ENCODE measurements at regions of chr10 and their contacts with region 1.

Region 1: GRCh38 chr10:111856631-111857030 is 326.9 kb downstream of the GPAM start:
- DNase-seq: no peak
- H3K4me3 ChIP-seq: no peak overlapping the region
- H3K27ac ChIP-seq: no peak overlapping the region
- H3K4me1 ChIP-seq: no peaks in the 10 kb centered on the region
- H3K27me3 ChIP-seq: no peaks in the 10 kb centered on the region
- CTCF ChIP-seq: peak in 1 of 3 donors; percentile 29
- POLR2A ChIP-seq: no peak

Region 2: DNA sequence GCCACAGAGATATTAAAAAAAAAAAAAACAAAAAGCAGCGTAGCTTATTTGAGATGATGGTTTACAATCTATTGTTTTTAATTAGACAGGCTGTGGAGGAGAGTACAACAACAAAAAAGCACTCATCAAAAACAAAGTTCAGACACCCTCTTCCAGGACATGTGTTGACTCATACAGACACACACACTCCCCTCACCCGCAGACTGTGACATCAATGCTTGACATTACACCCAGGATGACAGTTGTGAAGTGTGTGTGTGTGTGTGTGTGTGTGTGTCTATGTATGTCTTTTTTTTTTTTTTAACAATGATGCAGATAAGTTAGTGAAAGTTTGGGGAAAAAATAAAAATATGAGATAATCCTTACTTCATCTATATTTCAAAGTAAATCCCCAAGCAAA is 23.3 kb after region 1 on chr10:
- intact Hi-C with region 1: loop called (anchors 1 kb)
- DNase-seq: no peak
- H3K4me3 ChIP-seq: no peak overlapping the region
- H3K27ac ChIP-seq: no peak overlapping the region
- H3K4me1 ChIP-seq: no peaks in the 10 kb centered on the region
- H3K27me3 ChIP-seq: no peaks in the 10 kb centered on the region
- CTCF ChIP-seq: no peak
- POLR2A ChIP-seq: no peak

Region 3: DNA sequence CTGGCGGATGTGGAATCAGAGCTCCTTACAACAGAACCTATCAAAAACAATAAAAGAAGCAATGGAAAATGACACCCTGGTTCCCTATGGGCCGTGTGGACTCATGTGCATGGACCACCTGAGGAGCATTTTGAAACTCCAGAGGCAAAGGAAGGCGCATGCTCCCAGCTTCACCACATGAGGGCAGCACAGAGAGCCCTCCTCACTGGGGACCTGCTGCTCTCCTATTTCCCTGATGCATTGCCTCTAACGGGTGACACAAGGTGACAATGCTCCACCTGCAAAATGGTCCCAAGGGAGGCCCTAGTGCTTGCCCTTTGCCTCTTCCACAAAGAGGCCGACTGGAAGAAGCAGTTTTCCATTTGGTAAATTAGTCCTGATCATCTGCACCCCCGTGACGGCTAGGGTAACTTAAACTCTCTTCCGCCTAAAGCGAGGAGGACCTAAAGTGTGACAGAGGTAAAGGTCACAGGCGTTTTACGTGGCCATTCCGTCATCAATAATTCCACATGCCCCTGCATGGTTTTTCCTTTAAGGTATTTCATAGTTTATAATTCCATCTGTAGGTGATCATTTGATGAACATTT is 259.3 kb after region 1 on chr10:
- intact Hi-C with region 1: no loop called
- DNase-seq: no peak
- H3K4me3 ChIP-seq: no peak overlapping the region
- H3K27ac ChIP-seq: no peak overlapping the region
- H3K4me1 ChIP-seq: no peaks in the 10 kb centered on the region
- H3K27me3 ChIP-seq: no peaks in the 10 kb centered on the region
- CTCF ChIP-seq: peak in 1 of 3 donors; percentile 25
- POLR2A ChIP-seq: no peak